ENCODE measurements at regions of chr12 and their contacts with region 1.

Region 1: DNA sequence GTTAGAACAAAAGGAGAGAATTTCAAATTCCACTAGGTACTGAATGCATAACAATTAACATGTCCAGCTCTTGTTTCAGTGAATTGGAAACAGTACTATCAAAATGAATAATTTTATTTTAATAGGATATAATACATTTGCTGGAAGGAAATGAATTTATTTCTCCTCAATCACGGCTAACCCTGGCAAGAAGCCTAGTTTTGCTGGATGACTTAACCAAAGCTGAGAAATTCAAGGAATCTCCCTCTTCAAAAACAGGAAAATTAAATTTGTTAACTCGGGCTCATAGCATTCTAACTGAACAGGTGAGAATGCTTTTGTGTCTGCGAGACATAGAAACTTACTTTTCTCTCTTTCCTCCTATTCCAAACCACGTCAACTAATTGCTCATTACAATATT is 163.5 kb upstream of the NEDD1 start:
- DNase-seq: no peak
- H3K4me3 ChIP-seq: no peak overlapping the region
- H3K27ac ChIP-seq: no peak overlapping the region
- H3K4me1 ChIP-seq: no peaks in the 10 kb centered on the region
- H3K27me3 ChIP-seq: no peaks in the 10 kb centered on the region
- CTCF ChIP-seq: no peak

Region 2: DNA sequence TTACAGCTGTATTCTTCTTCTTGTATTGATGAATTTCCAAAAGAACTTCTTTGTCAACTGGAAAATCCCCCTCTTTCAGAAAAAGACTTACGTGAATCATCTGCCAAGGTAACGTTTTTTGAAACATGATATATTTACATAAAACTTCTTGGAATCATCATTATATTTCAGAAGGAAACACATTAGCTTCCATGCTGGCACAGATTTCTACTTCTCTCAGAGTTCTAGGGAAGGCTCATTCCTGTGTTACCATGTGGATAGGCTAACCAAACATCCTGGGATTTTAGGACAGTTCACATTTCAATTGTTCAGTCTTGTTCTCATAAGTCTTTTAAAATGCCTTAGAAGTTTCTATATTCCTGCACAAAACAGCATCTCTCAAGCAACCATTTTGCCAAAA is 43.2 kb after region 1 on chr12:
- CTCF ChIA-PET with region 1: no interaction called
- dilution Hi-C with region 1: loop called (anchors 5 kb)
- in situ Hi-C with region 1: no loop called
- intact Hi-C with region 1: no loop called
- DNase-seq: no peak
- H3K4me3 ChIP-seq: no peak overlapping the region
- H3K27ac ChIP-seq: no peak overlapping the region
- H3K4me1 ChIP-seq: no peaks in the 10 kb centered on the region
- H3K27me3 ChIP-seq: peaks cover 2% of the 10 kb centered on the region
- CTCF ChIP-seq: no peak